ENCODE measurements at regions of chr1 and their contacts with region 1.

Region 1: GRCh38 chr1:214123061-214123784 is 135.4 kb downstream of the PROX1 start:
- DNase-seq: peak in 1 of 2 experiments; percentile 80
- H3K4me3 ChIP-seq: no peak overlapping the region
- H3K27ac ChIP-seq: no peak overlapping the region
- H3K4me1 ChIP-seq: no peaks in the 10 kb centered on the region
- H3K27me3 ChIP-seq: no peaks in the 10 kb centered on the region; a peak in 1 of 7 replicates
- CTCF ChIP-seq: peak; percentile 11 to 84 (median 80)
- EP300 ChIP-seq: no peak
- POLR2A ChIP-seq: no peak
- RAD21 ChIP-seq: peak; percentile 98 to 100

Region 2: DNA sequence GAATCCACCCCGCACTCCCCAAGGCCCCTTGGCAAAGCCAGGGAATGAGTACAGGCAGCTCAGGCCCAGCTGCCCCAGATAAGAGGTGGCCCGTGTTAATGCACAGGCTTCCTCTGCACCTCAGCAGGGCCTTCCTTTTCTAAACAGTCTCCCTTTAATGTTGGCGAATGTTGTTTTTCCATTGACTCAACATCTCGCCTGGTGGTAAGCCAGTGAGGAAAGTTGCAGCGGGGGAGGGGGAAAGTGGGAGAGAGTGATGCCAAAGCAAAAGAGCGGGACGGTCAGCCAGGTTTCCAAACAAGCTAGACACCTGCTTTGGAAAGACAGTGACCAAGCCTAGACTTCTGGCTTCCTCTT is 145.8 kb before region 1 on chr1:
- CTCF ChIA-PET with region 1: interaction called, 11 read pairs
- POLR2A ChIA-PET with region 1: no interaction called
- DNase-seq: no peak
- H3K4me3 ChIP-seq: peak overlapping the region in 1 of 4 experiments; percentile 26; a peak in 1 of 8 replicates
- H3K27ac ChIP-seq: no peak overlapping the region
- H3K4me1 ChIP-seq: peaks cover 1 to 15% (median 8%) of the 10 kb centered on the region in 4 experiments; a peak in 6 of 7 replicates
- H3K27me3 ChIP-seq: peaks cover 32 to 63% (median 58%) of the 10 kb centered on the region in 4 experiments
- CTCF ChIP-seq: no peak
- EP300 ChIP-seq: no peak
- POLR2A ChIP-seq: no peak
- RAD21 ChIP-seq: 0 out of 4 replicates have a peak, but pooled peaks of 1 of the 2 experiments have one; percentile 6

Region 3: GRCh38 chr1:213987927-213988506 is 135.2 kb before region 1 on chr1 and contains the start of gene PROX1:
- CTCF ChIA-PET with region 1: interaction called, 11 read pairs
- POLR2A ChIA-PET with region 1: interaction called, 3 read pairs
- DNase-seq: no peak
- H3K4me3 ChIP-seq: peak within 1 kb of the TSS; percentile 55 to 85 (median 69)
- H3K27ac ChIP-seq: no peak within 1 kb of the TSS; the same call in 1 of the 2 replicates
- H3K4me1 ChIP-seq: peaks cover 21 to 42% (median 27%) of the 10 kb centered on the region in 4 experiments
- H3K27me3 ChIP-seq: peaks cover 32 to 66% (median 61%) of the 10 kb centered on the region in 4 experiments
- CTCF ChIP-seq: no peak
- EP300 ChIP-seq: no peak
- POLR2A ChIP-seq: peak in 1 of 2 experiments; percentile 52; a peak in 1 of 3 replicates
- RAD21 ChIP-seq: no peak; a peak in 1 of 4 replicates
- total RNA-seq, gene PROX1: 1.5 and 2.0 TPM in 2 replicates

Region 4: GRCh38 chr1:214006845-214007244 is 116.4 kb before region 1 on chr1:
- CTCF ChIA-PET with region 1: interaction called, 11 read pairs
- POLR2A ChIA-PET with region 1: no interaction called
- DNase-seq: no peak
- H3K4me3 ChIP-seq: no peak overlapping the region
- H3K27ac ChIP-seq: no peak overlapping the region
- H3K4me1 ChIP-seq: 0 out of 7 replicates have a peak, but pooled peaks cover 0 to 2% (median 0%) of the 10 kb centered on the region in 4 experiments
- H3K27me3 ChIP-seq: no peaks in the 10 kb centered on the region
- CTCF ChIP-seq: peak in 1 of 3 experiments; percentile 3; a peak in 1 of 4 replicates
- EP300 ChIP-seq: no peak
- POLR2A ChIP-seq: no peak
- RAD21 ChIP-seq: peak; percentile 34 to 44

Region 5: GRCh38 chr1:214037468-214037867 is 85.8 kb before region 1 on chr1:
- CTCF ChIA-PET with region 1: no interaction called
- POLR2A ChIA-PET with region 1: no interaction called
- DNase-seq: no peak
- H3K4me3 ChIP-seq: no peak overlapping the region
- H3K27ac ChIP-seq: no peak overlapping the region
- H3K4me1 ChIP-seq: peaks cover 0 to 3% (median 0%) of the 10 kb centered on the region in 4 experiments; a peak in 1 of 7 replicates
- H3K27me3 ChIP-seq: no peaks in the 10 kb centered on the region
- CTCF ChIP-seq: no peak
- EP300 ChIP-seq: no peak
- POLR2A ChIP-seq: no peak
- RAD21 ChIP-seq: no peak

Region 6: DNA sequence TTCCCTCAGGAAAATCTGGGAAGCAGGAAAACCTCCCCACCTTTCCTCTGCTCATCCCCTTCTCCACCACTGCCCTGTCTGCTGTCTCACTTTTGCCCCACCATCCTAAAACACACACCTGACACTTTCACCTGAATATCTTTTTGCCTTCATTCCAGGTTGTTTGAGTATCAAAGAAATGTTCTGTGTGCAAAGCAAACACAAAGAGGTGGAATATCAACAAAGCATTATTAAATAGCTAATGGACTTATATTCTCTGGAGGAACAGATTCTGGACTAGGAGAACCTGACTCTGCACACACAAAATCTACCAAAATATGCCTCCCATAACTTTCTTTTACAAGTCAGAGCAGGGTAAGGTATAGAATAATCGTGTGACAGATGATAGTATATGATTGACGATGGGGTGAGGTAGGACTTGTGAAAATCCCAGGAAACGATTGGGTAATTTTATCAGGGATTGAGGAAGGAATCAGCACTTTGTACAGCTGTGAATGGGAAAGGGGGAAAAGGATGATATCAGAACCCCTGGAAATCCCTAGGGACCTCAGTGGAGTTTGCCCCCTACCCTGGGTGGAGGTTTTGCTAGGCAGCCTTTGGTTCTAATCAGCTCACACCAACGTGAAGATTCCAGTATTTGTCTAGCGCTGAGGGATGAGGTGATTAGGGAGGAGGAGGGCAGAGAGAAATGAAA is 47.8 kb before region 1 on chr1:
- CTCF ChIA-PET with region 1: no interaction called
- POLR2A ChIA-PET with region 1: no interaction called
- DNase-seq: no peak
- H3K4me3 ChIP-seq: no peak overlapping the region
- H3K27ac ChIP-seq: no peak overlapping the region
- H3K4me1 ChIP-seq: peaks cover 0 to 9% (median 0%) of the 10 kb centered on the region in 4 experiments; a peak in 2 of 7 replicates
- H3K27me3 ChIP-seq: no peaks in the 10 kb centered on the region
- CTCF ChIP-seq: no peak
- EP300 ChIP-seq: no peak
- POLR2A ChIP-seq: no peak
- RAD21 ChIP-seq: no peak

Region 7: GRCh38 chr1:214111796-214112195 is 11.4 kb before region 1 on chr1:
- CTCF ChIA-PET with region 1: interaction called, 18 read pairs
- POLR2A ChIA-PET with region 1: no interaction called
- DNase-seq: no peak
- H3K4me3 ChIP-seq: no peak overlapping the region
- H3K27ac ChIP-seq: no peak overlapping the region
- H3K4me1 ChIP-seq: peaks cover 3 to 7% (median 5%) of the 10 kb centered on the region in 4 experiments; a peak in 6 of 7 replicates
- H3K27me3 ChIP-seq: no peaks in the 10 kb centered on the region
- CTCF ChIP-seq: no peak
- EP300 ChIP-seq: no peak
- POLR2A ChIP-seq: no peak
- RAD21 ChIP-seq: no peak